H1 (cell line): ENCODE measurements at regions of chr7 and their contacts with region 1.

Region 1: GRCh38 chr7:30702200-30702599 is 19.9 kb upstream of the CRHR2 start:
- DNase-seq: no peak
- H3K4me3 ChIP-seq: no peak overlapping the region
- H3K27ac ChIP-seq: no peak overlapping the region
- H3K4me1 ChIP-seq: peaks cover 0 to 13% (median 8%) of the 10 kb centered on the region in 4 experiments; a peak in 6 of 7 replicates
- H3K27me3 ChIP-seq: no peaks in the 10 kb centered on the region; a peak in 1 of 7 replicates
- CTCF ChIP-seq: peak; percentile 37 to 54 (median 44)
- EP300 ChIP-seq: no peak
- POLR2A ChIP-seq: no peak
- RAD21 ChIP-seq: peak; percentile 55 to 65

Region 2: DNA sequence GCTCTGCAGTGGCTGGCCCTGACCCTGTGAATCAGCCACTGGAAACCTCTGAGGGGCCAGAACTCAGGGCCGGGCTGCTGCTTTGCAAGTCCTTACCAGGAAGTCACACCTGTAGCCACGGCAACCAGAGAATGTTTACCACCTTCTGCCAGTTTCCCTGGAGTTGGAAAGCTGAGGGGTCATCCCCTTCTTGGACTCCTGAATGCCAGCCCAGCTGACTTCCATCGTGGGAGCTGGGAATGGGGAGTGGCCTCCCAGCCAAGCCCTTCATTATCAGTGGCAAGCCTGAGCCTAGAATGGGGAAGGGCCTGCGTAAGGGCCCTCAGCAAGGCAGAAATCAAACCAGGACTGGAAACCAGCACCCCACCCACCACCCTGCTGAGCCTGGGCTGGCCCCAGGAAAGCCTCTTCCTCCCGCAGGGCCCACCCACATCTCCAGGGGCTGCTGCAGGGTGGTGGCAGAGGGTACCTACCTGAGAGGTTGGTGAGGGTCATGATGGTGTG is 13.4 kb before region 1 on chr7:
- CTCF ChIA-PET with region 1: interaction called, 26 read pairs
- POLR2A ChIA-PET with region 1: interaction called, 3 read pairs
- DNase-seq: no peak
- H3K4me3 ChIP-seq: no peak overlapping the region
- H3K27ac ChIP-seq: no peak overlapping the region; the same call in 1 of the 2 replicates
- H3K4me1 ChIP-seq: peaks cover 0 to 5% (median 0%) of the 10 kb centered on the region in 4 experiments; a peak in 1 of 7 replicates
- H3K27me3 ChIP-seq: peaks cover 0 to 11% (median 6%) of the 10 kb centered on the region in 4 experiments; a peak in 4 of 7 replicates
- CTCF ChIP-seq: no peak
- EP300 ChIP-seq: no peak
- POLR2A ChIP-seq: no peak
- RAD21 ChIP-seq: no peak